ENCODE measurements at regions of chrX and their contacts with region 1.

Region 1: DNA sequence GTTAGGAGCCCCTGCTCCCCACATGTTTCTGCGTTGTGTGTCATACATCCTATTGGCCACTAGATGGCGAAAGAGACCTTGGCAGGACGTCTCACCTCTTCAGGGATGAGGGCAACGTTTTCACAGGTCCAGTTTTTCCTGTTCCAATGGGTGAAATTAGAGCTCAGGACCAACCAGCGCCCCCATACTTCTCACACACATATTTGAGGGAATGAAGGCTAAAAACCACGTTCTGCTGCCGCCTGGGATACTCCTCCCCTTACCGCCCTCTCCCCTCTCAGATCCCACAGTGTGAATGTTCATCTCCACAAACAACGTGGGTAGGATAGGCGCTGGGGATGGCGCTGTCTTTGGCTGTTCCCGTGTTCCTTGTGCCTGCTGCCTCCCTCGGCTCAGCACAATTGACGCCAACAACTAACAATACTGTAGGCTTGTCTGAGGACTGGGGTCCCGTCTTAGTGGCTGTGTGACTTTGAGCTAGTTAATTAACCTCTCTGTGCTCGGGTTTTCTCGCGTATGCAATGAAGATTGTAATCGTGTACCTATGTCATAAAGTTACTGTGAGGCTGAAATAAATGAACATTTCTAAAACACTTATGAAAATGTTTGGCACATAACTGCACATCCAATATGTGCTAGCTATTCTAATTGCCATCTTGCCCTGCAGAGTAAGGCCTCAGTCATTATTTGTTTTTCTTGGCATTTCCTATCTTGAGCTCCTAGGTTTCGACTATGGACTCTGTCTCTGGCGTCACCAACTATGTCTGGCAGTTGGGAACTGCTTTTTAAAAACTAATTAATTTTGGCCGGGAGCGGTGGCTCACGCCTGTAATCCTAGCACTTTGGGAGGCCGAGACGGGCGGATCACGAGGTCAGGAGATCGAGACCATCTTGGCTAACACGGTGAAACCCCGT is 181.3 kb upstream of the STK26 start:
- DNase-seq: no peak
- ATAC-seq: peak; percentile 62

Region 2: GRCh38 chrX:132071260-132071659 is 229.5 kb after region 1 on chrX:
- intact Hi-C with region 1: loop called (anchors 10 kb)
- DNase-seq: no peak
- ATAC-seq: no peak

Measured in left ventricle myocardium superior (tissue), 1 donor.